Caco-2 (cell line): ENCODE measurements at regions of chr3 and their contacts with region 1.

Region 1: GRCh38 chr3:4712143-4712542 is 219.0 kb downstream of the ITPR1 start:
- DNase-seq: no peak
- H3K4me3 ChIP-seq: no peak overlapping the region
- H3K4me3 Mint-ChIP-seq: no peak overlapping the region
- H3K27ac Mint-ChIP-seq: no peak overlapping the region
- H3K4me1 ChIP-seq: no peaks in the 10 kb centered on the region; the same call in 1 of the 2 replicates
- H3K4me1 Mint-ChIP-seq: peaks cover 5% of the 10 kb centered on the region
- H3K27me3 ChIP-seq: no peaks in the 10 kb centered on the region
- H3K27me3 Mint-ChIP-seq: no peaks in the 10 kb centered on the region
- CTCF ChIP-seq: no peak

Region 2: GRCh38 chr3:4438293-4438692 is 273.9 kb before region 1 on chr3:
- CTCF ChIA-PET with region 1: no interaction called
- POLR2A ChIA-PET with region 1: no interaction called
- intact Hi-C with region 1: no loop called
- DNase-seq: peak; percentile 33 to 46
- H3K4me3 ChIP-seq: no peak overlapping the region
- H3K4me3 Mint-ChIP-seq: no peak overlapping the region
- H3K27ac Mint-ChIP-seq: no peak overlapping the region
- H3K4me1 ChIP-seq: peaks cover 8% of the 10 kb centered on the region; the same call in 1 of the 2 replicates
- H3K4me1 Mint-ChIP-seq: peaks cover 5% of the 10 kb centered on the region
- H3K27me3 ChIP-seq: no peaks in the 10 kb centered on the region
- H3K27me3 Mint-ChIP-seq: no peaks in the 10 kb centered on the region
- CTCF ChIP-seq: no peak

Region 3: DNA sequence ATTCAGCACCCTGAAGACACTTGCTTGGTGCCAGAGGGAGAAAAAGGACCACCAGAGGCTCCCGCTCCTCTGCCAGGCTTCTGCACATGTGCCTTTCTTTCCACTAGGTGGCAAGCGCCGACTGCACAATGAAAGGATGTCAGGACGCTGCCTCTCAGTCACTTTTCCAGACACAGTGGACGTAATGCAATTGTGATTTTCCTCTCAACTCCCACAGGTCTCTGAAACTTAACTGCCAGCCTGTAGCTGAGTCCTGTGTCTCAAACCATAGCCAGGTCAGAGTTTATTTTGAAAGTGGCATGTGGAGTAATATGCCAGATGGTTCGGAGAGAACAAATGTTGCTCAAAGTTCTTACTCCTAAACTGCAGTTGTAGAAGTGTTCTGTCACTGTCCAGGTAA is 56.1 kb before region 1 on chr3:
- CTCF ChIA-PET with region 1: no interaction called
- POLR2A ChIA-PET with region 1: no interaction called
- intact Hi-C with region 1: loop called (anchors 1 kb)
- DNase-seq: peak; percentile 72 to 76
- H3K4me3 ChIP-seq: no peak overlapping the region
- H3K4me3 Mint-ChIP-seq: no peak overlapping the region
- H3K27ac Mint-ChIP-seq: no peak overlapping the region
- H3K4me1 ChIP-seq: no peaks in the 10 kb centered on the region
- H3K4me1 Mint-ChIP-seq: no peaks in the 10 kb centered on the region
- H3K27me3 ChIP-seq: no peaks in the 10 kb centered on the region
- H3K27me3 Mint-ChIP-seq: no peaks in the 10 kb centered on the region
- CTCF ChIP-seq: peak; percentile 87 to 96

Region 4: GRCh38 chr3:4666078-4666477 is 46.1 kb before region 1 on chr3:
- CTCF ChIA-PET with region 1: no interaction called
- POLR2A ChIA-PET with region 1: no interaction called
- intact Hi-C with region 1: no loop called
- DNase-seq: no peak
- H3K4me3 ChIP-seq: no peak overlapping the region
- H3K4me3 Mint-ChIP-seq: no peak overlapping the region
- H3K27ac Mint-ChIP-seq: no peak overlapping the region
- H3K4me1 ChIP-seq: no peaks in the 10 kb centered on the region
- H3K4me1 Mint-ChIP-seq: no peaks in the 10 kb centered on the region
- H3K27me3 ChIP-seq: no peaks in the 10 kb centered on the region
- H3K27me3 Mint-ChIP-seq: no peaks in the 10 kb centered on the region
- CTCF ChIP-seq: no peak

Region 5: DNA sequence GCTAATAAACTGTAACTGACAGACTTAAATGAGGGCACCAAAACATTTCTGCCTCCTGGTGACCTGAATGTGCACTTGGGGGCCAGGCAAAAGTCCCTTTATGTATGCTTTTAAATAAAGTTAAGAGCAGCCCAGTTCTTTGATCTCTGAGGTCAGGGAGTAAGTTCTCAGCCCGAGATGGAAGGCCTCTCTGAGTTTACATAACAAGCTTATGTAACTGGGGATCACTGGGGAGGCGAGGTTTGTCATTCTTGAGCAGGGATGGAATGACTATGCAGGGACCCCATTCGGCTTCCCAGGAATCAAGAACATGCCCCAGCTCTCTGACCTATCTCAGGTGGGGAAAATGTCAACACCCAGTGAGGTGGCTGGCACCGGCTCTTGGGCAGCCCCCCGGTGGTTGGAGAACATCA is 68.4 kb after region 1 on chr3:
- CTCF ChIA-PET with region 1: interaction called, 10 read pairs
- POLR2A ChIA-PET with region 1: interaction called, 3 read pairs
- intact Hi-C with region 1: no loop called
- DNase-seq: peak in 1 of 2 experiments; percentile 20
- H3K4me3 ChIP-seq: no peak overlapping the region
- H3K4me3 Mint-ChIP-seq: no peak overlapping the region
- H3K27ac Mint-ChIP-seq: no peak overlapping the region
- H3K4me1 ChIP-seq: peaks cover 9% of the 10 kb centered on the region; the same call in 1 of the 2 replicates
- H3K4me1 Mint-ChIP-seq: peaks cover 7% of the 10 kb centered on the region
- H3K27me3 ChIP-seq: no peaks in the 10 kb centered on the region
- H3K27me3 Mint-ChIP-seq: no peaks in the 10 kb centered on the region
- CTCF ChIP-seq: no peak

Region 6: GRCh38 chr3:4888913-4889846 is 177.0 kb after region 1 on chr3:
- CTCF ChIA-PET with region 1: no interaction called
- POLR2A ChIA-PET with region 1: no interaction called
- intact Hi-C with region 1: loop called (anchors 5 kb)
- DNase-seq: no peak
- H3K4me3 ChIP-seq: no peak overlapping the region
- H3K4me3 Mint-ChIP-seq: no peak overlapping the region
- H3K27ac Mint-ChIP-seq: no peak overlapping the region
- H3K4me1 ChIP-seq: no peaks in the 10 kb centered on the region
- H3K4me1 Mint-ChIP-seq: no peaks in the 10 kb centered on the region
- H3K27me3 ChIP-seq: no peaks in the 10 kb centered on the region
- H3K27me3 Mint-ChIP-seq: peaks cover 3% of the 10 kb centered on the region
- CTCF ChIP-seq: no peak

Region 7: DNA sequence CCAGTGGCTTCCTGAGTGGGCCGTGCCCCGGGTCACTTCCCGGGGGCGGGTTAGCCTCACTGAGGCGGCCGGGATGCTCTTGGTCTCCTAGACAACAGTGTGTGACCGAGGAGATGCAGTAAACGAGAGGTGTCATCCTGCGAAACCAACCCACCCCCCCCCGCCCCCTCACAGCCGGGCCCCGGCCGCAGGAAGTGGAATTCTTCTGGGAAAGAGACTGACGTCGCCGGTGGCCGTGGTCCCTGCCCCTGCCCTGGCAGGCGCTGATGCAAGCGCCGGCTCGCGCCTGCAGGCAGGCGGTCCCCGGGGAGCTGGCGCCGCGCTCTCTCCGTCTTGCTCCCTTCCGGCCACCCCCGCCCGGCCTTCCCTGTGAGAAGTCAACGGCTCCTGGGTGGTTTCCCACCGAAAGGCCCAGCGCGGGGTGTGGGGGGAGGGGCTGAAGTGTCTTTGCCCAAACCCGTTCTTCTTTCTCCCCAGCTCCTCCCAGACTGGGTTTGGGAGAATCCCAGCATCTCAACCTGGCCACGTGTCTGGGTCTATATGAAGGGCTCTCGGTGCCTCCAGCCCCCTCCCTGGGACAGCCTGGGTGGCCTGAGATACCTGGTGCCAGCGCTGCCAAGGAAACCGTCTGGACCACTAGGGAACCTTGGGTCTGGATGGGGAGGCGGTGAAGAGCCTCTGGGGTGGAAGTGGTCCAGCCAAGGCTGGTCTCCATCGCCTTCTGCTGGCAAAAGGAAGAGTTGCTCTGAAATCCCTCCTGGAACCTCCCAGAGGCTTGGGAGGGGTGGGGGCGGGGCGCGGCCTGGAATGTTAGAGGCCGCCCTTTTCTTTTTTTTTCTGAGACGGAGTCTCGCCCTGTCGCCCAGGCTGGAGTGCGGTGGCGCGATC is 314.4 kb after region 1 on chr3:
- CTCF ChIA-PET with region 1: interaction called, 8 read pairs
- POLR2A ChIA-PET with region 1: no interaction called
- intact Hi-C with region 1: loop called (anchors 1 kb)
- DNase-seq: peak; percentile 85 to 87
- H3K4me3 ChIP-seq: peak overlapping the region; percentile 48
- H3K4me3 Mint-ChIP-seq: peak overlapping the region; percentile 88
- H3K27ac Mint-ChIP-seq: peak overlapping the region; percentile 93
- H3K4me1 ChIP-seq: peaks cover 27% of the 10 kb centered on the region
- H3K4me1 Mint-ChIP-seq: peaks cover 30% of the 10 kb centered on the region
- H3K27me3 ChIP-seq: no peaks in the 10 kb centered on the region
- H3K27me3 Mint-ChIP-seq: no peaks in the 10 kb centered on the region
- CTCF ChIP-seq: peak; percentile 32 to 58

Region 8: DNA sequence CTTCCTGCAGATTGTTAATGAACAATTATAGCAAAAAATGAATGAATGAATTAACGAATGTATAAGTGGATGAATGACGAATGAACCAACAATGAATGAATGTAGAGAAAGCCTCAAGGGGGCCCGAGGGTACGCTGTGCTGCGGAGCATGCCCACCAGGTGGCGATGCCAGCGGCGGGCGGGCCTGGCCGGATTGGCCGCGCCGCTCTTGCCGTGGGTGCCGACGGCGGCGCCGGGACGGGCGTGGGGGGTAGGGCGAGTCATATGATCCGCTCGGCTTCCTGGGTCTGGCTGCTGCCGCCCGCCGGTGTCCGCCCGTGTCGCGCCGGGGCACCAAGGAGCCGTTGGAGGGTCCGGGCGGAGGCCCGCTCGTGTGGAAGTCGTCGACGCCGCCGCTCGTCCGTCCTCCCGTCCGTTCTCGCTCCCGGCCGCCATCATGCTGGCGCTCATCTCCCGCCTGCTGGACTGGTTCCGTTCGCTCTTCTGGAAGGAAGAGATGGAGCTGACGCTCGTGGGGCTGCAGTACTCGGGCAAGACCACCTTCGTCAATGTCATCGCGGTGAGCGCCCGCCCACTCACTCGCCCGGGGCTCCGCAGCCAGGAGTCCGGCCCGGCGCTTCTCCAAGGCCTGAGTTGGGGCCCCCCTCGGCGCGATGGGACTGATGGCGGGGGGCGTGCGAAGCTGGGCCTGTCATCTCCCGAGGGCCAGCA is 410.0 kb after region 1 on chr3 and contains the start of gene ARL8B:
- CTCF ChIA-PET with region 1: no interaction called
- POLR2A ChIA-PET with region 1: no interaction called
- intact Hi-C with region 1: loop called (anchors 10 kb)
- DNase-seq: peak; percentile 87 to 94
- H3K4me3 ChIP-seq: peak within 1 kb of the TSS; percentile 99
- H3K4me3 Mint-ChIP-seq: peak within 1 kb of the TSS; percentile 84
- H3K27ac Mint-ChIP-seq: peak within 1 kb of the TSS; percentile 84
- H3K4me1 ChIP-seq: peaks cover 3% of the 10 kb centered on the region; the same call in 1 of the 2 replicates
- H3K4me1 Mint-ChIP-seq: peaks cover 14% of the 10 kb centered on the region
- H3K27me3 ChIP-seq: no peaks in the 10 kb centered on the region
- H3K27me3 Mint-ChIP-seq: no peaks in the 10 kb centered on the region
- CTCF ChIP-seq: peak; percentile 83 to 94
- total RNA-seq, gene ARL8B: 56.1 and 65.0 TPM in 2 replicates